Activated naive CD4-positive, alpha-beta T cell treated with anti-CD3 and anti-CD28 coated beads for 36 hours (primary cell): ENCODE measurements at regions of chr16 and their contacts with region 1.

Region 1: DNA sequence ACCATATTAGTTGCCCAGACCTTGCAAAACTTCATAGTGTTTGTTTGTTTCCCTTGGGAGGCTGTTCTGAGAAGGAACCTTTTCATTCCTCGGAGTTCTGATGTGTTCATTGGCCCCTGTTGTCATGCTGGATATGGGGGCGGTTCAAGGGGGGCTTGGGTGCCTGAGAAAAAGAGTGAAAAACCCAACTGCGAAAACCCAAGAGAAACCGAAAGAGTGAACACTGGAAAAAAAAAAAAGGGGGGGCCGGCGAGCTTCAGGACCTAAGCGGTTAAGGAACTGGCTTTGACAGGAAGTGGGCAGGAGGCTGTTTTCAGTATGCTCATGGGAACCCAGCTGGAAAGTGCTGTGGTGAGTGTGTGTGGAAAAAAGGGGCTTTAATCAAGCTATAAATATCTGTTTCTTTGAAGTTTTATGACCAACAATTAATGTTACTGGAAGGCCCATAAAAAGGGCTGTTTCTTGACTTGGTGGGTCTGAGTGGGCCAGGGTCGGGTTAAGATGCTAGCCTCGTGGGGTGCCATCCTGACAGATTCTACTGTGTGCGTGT is 510.7 kb downstream of the MAF start:
- DNase-seq: peak; percentile 78
- H3K4me3 Mint-ChIP-seq: peak overlapping the region; percentile 37
- H3K27ac Mint-ChIP-seq: peak overlapping the region; percentile 88
- H3K4me1 Mint-ChIP-seq: peaks cover 45% of the 10 kb centered on the region
- H3K27me3 Mint-ChIP-seq: no peaks in the 10 kb centered on the region

Region 2: GRCh38 chr16:78916928-78917545 is 172.8 kb before region 1 on chr16:
- CTCF ChIA-PET with region 1: no interaction called
- intact Hi-C with region 1: no loop called
- DNase-seq: no peak
- H3K4me3 Mint-ChIP-seq: no peak overlapping the region
- H3K27ac Mint-ChIP-seq: no peak overlapping the region
- H3K4me1 Mint-ChIP-seq: peaks cover 5% of the 10 kb centered on the region
- H3K27me3 Mint-ChIP-seq: no peaks in the 10 kb centered on the region

Region 3: GRCh38 chr16:79076047-79076767 is 13.6 kb before region 1 on chr16:
- CTCF ChIA-PET with region 1: interaction called, 5 read pairs
- intact Hi-C with region 1: loop called (anchors 2 kb)
- DNase-seq: peak; percentile 33
- H3K4me3 Mint-ChIP-seq: peak overlapping the region; percentile 25
- H3K27ac Mint-ChIP-seq: peak overlapping the region; percentile 83
- H3K4me1 Mint-ChIP-seq: peaks cover 43% of the 10 kb centered on the region
- H3K27me3 Mint-ChIP-seq: peaks cover 7% of the 10 kb centered on the region

Region 4: DNA sequence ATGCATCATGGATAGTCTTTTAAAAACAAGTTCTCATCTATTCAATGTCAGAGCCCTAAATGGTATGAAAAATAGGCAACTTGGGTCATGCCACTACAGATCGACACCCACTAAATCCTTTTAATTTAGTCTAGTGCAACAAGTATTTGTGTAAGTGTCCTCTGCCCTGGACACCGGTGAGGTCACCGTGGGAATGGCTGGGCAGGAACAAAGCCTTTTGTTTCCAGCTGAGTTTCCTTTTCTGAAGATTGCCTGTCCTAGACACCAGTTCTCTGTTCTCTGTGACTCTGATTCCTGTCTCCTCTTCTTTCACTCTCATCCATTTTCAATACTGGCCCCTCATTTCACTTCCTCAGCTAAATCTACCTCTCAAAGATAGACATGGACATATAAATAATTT is 64.3 kb after region 1 on chr16:
- CTCF ChIA-PET with region 1: no interaction called
- intact Hi-C with region 1: loop called (anchors 5 kb)
- DNase-seq: no peak
- H3K4me3 Mint-ChIP-seq: no peak overlapping the region
- H3K27ac Mint-ChIP-seq: no peak overlapping the region
- H3K4me1 Mint-ChIP-seq: peaks cover 24% of the 10 kb centered on the region
- H3K27me3 Mint-ChIP-seq: no peaks in the 10 kb centered on the region